ENCODE measurements at regions of chr12 and their contacts with region 1.

Region 1: DNA sequence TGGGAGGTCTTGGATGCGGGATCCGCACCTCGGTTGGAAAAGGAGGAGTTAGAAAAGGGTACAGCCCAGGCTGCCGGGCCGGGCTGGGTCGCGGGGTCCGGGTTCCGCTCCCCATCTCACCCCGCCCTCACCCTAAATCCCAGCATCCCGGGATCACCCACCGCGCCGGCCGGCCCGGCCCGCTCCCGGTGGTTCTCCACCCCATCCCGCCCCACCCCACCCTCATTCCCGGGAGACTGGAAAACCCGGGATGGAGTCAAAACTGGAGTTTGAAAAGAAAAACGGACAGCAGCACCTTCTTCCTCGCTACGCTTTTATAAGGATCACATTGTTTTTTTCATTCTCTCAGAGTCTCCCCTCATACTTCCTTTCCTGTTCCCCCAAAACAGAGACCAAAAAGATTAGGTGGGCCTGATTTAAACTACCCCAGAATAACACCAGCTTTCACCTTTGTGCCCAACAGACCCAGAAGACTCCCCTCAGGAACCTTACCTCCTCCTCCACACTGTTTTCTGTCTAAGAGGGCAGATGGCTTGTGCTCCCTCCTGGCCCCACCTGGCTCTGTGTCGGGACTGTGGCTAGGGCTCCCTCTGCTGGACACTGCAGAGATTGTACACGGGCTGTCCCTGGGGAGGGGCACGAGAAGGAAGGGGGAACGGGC is 2.8 kb downstream of the GLI1 start:
- DNase-seq: peak; percentile 85
- H3K4me3 Mint-ChIP-seq: peak overlapping the region; percentile 86
- H3K27ac Mint-ChIP-seq: peak overlapping the region; percentile 72
- H3K4me1 Mint-ChIP-seq: peaks cover 60% of the 10 kb centered on the region
- H3K27me3 Mint-ChIP-seq: peaks cover 21% of the 10 kb centered on the region

Region 2: DNA sequence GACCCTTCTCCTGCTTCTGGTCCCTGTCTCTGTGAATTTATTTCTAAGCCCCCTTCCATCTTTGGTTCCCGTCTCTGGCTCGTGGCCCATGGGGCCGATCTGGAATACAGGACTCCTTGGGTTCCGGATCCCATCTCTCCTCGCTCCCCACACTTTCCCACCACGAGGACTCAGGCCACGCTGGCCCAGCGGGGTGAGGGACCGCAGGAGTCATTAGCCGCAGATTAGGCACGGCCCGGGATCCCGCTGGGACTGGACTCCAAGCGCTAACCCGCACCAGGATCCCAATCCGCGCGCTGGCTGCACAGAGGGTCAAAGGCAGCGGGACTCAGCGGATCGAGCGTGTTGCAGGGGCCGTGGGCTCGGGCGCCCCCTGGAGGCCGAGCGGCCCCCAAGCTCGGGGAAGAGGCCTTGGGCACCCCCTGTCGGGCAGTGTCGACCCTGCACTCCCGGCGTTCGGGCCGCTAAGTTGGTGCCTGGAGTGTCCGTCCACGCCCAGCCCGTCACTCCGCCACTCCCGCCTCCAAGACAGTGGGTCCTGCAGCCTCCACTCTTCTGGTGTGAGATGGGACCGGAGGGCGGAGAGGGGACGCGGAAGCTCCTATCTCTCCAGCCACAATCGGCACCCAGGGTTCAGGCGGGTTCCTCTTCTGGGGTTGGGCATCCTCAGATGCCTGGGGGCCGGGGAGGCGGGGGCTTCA is 223.4 kb before region 1 on chr12:
- intact Hi-C with region 1: loop called (anchors 1 kb)
- DNase-seq: peak; percentile 86
- H3K4me3 Mint-ChIP-seq: peak overlapping the region; percentile 95
- H3K27ac Mint-ChIP-seq: peak overlapping the region; percentile 78
- H3K4me1 Mint-ChIP-seq: peaks cover 64% of the 10 kb centered on the region
- H3K27me3 Mint-ChIP-seq: peaks cover 48% of the 10 kb centered on the region

Region 3: GRCh38 chr12:57280211-57281062 is 181.9 kb before region 1 on chr12:
- intact Hi-C with region 1: loop called (anchors 1 kb)
- DNase-seq: peak; percentile 69
- H3K4me3 Mint-ChIP-seq: peak overlapping the region; percentile 50
- H3K27ac Mint-ChIP-seq: peak overlapping the region; percentile 92
- H3K4me1 Mint-ChIP-seq: peaks cover 15% of the 10 kb centered on the region
- H3K27me3 Mint-ChIP-seq: no peaks in the 10 kb centered on the region

Region 4: GRCh38 chr12:57430931-57431720 is 31.3 kb before region 1 on chr12 and contains the start of gene R3HDM2:
- intact Hi-C with region 1: loop called (anchors 1 kb)
- DNase-seq: peak; percentile 90
- H3K4me3 Mint-ChIP-seq: peak within 1 kb of the TSS; percentile 98
- H3K27ac Mint-ChIP-seq: peak within 1 kb of the TSS; percentile 99
- H3K4me1 Mint-ChIP-seq: peaks cover 34% of the 10 kb centered on the region
- H3K27me3 Mint-ChIP-seq: no peaks in the 10 kb centered on the region
- total RNA-seq, gene R3HDM2: 39.0 and 44.6 TPM in 2 replicates

Region 5: DNA sequence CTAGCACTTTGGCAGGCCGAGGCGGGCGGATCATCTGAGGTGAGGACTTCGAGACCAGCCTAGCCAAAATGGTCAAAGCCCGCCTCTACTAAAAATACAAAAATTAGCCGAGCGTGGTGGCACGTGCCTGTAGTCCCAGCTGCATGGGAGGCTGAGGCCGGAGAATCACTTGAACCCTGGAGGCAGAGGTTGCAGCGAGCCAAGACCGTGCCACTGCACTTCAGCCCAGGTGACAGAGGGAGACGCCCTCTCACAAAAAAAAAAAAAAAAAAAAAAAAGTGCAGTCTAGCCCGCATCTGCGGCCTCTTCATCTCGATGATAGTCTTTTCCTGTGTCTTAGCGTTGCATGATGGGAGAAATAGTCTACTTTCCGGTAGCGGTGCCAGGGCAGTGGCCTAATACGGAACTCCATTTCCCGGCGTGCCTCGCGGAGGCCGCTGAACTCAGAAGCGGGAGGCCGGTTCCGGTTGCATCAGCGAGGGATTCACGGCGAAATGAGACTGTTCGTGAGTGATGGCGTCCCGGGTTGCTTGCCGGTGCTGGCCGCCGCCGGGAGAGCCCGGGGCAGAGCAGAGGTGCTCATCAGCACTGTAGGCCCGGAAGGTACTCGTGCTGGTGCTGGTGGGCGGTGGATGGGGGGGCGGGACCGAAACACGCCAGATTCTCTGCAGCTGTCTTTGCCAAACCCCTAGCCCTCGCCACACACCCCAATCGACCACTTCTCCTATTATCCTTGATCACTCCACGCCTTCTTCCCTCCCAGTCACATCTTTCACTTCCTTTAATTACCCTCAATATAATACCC is 25.4 kb after region 1 on chr12 and contains the start of gene MARS1:
- intact Hi-C with region 1: loop called (anchors 1 kb)
- DNase-seq: peak; percentile 91
- H3K4me3 Mint-ChIP-seq: peak within 1 kb of the TSS; percentile 97
- H3K27ac Mint-ChIP-seq: peak within 1 kb of the TSS; percentile 96
- H3K4me1 Mint-ChIP-seq: peaks cover 33% of the 10 kb centered on the region
- H3K27me3 Mint-ChIP-seq: no peaks in the 10 kb centered on the region
- total RNA-seq, gene MARS1: 283 and 318 TPM in 2 replicates

Region 6: DNA sequence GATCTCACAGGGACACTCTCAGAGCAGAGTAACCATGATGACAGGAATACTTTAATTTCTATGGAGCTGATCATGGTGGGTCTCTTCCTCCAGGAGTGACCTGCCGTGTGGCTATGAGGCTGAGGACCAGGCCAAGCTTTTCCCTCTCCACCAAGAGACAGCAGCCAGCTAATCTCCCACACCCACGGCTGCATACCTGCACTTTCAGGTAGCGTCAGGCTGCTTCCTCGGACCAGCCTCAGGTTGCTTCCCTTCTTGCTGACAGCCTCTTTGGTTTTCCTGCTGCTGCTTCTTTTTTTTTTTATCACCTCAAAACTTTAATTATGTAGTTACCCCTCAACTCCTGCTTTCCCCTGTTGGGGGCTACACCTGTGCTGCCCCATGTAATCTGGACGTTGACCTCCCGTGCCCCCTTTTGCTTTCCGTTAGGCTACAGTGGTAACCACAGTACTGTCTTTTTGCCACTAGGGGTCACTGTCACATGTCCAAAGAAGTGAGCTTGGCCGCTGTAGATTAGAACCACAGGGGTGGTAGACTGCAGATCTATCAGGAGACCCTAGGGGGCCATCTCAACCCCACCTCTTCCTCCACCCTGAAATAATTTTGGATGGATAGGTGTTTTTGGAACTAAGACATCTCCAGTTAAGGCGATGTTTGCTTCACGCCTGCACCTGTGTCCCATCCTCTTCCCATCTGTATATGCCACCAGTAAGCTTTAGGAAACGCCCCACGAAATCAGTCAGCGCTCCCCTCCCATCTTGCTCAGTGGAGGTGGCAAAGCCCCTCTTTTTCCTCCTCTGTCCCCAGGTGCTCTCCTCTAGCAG is 120.8 kb after region 1 on chr12:
- intact Hi-C with region 1: no loop called
- DNase-seq: peak; percentile 61
- H3K4me3 Mint-ChIP-seq: no peak overlapping the region
- H3K27ac Mint-ChIP-seq: no peak overlapping the region
- H3K4me1 Mint-ChIP-seq: peaks cover 7% of the 10 kb centered on the region
- H3K27me3 Mint-ChIP-seq: peaks cover 3% of the 10 kb centered on the region

Region 7: GRCh38 chr12:57621497-57622292 is 159.3 kb after region 1 on chr12:
- intact Hi-C with region 1: loop called (anchors 1 kb)
- DNase-seq: peak; percentile 48
- H3K4me3 Mint-ChIP-seq: peak overlapping the region; percentile 80
- H3K27ac Mint-ChIP-seq: no peak overlapping the region
- H3K4me1 Mint-ChIP-seq: peaks cover 23% of the 10 kb centered on the region
- H3K27me3 Mint-ChIP-seq: peaks cover 91% of the 10 kb centered on the region